GM10248 (cell line): ENCODE measurements at regions of chr1 and their contacts with region 1.

Region 1: DNA sequence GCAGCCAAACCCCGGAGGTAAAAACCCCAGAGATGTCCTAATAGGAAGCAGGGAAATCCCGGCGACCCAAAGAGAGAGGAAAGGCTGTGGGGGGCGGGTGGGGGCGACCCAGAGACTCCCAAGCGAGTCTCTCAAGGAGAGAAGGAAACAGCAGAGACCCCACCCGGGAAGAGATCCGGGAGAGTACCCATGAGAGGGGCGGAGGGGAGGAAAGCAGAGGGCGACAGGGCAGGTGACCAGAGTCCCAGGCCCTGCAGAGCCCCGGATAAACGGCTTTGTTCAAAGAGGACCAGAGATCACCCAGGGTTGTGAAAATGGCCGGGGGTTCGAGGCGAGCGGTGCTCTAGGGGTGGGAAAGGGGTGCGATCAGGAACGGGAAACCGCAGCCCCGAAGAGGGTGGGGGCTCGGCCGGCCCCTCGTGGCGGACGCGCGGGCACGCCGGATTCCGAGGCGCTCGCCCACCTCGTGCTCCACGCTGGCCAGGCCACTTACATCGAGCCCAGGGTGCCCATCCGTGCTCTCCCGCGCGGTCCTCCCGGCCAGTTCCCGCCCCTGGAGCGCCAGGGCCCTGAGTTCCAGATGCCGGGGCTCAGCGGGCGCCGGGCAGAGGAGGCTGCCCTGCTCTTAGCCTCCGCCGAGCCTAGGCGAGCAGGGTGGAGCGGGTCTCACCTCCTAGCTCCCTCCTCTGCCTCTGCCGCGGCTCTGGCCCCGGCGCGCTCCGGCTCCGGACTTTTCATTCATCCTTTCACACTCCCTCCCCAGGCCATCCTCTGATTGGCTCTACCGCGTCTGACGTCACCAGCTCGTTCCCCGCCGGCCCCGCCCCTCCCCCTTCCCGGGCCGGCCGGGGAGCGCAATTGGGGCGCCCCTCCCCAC is 52.3 kb downstream of the RHBG start:
- DNase-seq: peak; percentile 95
- CTCF ChIP-seq: no peak

Region 2: GRCh38 chr1:156435545-156436141 is 14.3 kb after region 1 on chr1:
- CTCF ChIA-PET with region 1: interaction called, 30 read pairs
- POLR2A ChIA-PET with region 1: interaction called, 5 read pairs
- DNase-seq: peak; percentile 45
- CTCF ChIP-seq: no peak

Region 3: DNA sequence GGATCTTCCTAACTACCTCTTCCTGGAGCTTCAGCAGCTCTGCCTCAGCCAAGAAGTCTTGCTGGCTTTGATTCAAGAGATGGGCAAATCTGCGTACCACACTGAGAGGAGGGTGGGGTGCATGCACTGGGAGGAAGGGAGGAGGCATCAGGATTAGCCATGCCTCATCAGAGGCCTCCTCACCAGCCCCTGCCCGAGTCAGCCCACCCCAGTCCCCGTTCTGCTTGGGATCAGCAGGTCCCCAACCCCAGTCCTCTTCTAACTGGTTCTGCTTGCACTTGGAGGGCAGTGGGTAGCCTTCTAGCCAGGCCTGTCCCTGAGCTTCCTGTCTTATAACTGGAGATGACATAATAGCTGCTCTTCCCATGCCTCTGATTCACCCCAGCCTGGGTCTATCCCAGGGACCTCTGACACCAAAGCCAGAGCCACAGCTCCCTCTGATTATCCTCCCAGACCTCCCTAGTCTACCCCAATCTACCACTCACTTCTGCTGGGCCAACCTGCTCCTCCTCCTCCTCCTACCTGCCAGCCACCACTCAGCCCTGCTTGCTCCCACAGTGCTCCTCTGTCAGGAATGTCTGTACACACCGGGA is 119.6 kb after region 1 on chr1:
- CTCF ChIA-PET with region 1: no interaction called
- POLR2A ChIA-PET with region 1: no interaction called
- DNase-seq: no peak
- CTCF ChIP-seq: no peak